Activated naive CD4-positive, alpha-beta T cell treated with anti-CD3 and anti-CD28 coated beads, Interleukin-2, amount 10 ng/mL, durations not matched to agents 7 days and 5 days (primary cell): ENCODE measurements at regions of chr5 and their contacts with region 1.

Region 1: DNA sequence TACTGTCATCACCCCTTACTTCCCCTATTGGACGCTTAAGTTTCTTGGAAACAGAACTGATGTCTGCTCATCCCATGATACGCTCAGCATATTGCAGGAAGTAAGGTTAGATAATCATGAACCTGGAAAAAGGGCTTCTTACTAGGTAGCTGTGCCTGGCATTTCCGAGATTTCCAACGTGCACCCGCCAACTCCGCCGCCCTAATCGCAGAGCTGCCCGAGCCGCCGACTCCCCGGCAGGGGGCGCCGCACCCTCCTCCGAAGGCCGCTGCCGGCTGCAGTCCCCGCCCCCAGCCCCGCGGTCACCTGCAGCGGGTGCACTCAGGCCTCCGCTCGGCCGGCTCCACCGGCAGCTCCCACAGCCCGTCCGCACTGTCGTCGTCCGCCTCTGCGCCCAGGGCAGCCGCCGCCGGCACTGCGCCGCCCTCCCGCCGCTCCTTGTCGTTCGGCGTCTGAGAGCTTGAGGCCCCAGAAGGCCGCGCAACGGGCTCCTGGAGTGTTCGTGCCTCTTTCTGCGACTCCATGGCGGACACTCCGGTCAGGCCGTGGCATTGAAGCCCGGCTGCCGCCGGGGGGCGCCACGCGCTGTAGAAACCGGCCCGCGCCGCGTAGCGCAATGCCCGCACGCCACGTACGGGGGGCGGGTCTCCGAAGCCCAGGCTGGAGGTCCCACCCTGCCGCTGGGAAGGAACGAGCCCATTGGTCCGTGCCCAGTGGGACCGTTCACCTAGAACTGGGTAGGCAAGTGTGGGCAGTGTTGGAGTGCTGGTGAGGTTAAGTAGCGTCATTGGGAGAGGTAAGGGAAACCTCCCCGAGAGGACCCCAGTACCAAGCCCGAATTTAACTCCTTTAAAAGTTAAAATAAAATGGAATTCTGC is at the start of gene DTWD2:
- DNase-seq: peak; percentile 93
- H3K4me3 Mint-ChIP-seq: peak within 1 kb of the TSS; percentile 70
- H3K27ac Mint-ChIP-seq: peak within 1 kb of the TSS; percentile 76
- H3K4me1 Mint-ChIP-seq: peaks cover 16% of the 10 kb centered on the region
- H3K27me3 Mint-ChIP-seq: no peaks in the 10 kb centered on the region

Region 2: GRCh38 chr5:119063579-119064379 is 75.6 kb after region 1 on chr5:
- CTCF ChIA-PET with region 1: no interaction called
- DNase-seq: no peak
- H3K4me3 Mint-ChIP-seq: no peak overlapping the region
- H3K27ac Mint-ChIP-seq: no peak overlapping the region
- H3K4me1 Mint-ChIP-seq: peaks cover 10% of the 10 kb centered on the region
- H3K27me3 Mint-ChIP-seq: no peaks in the 10 kb centered on the region

Region 3: GRCh38 chr5:119238265-119239118 is 250.3 kb after region 1 on chr5:
- CTCF ChIA-PET with region 1: interaction called, 13 read pairs
- DNase-seq: no peak
- H3K4me3 Mint-ChIP-seq: no peak overlapping the region
- H3K27ac Mint-ChIP-seq: no peak overlapping the region
- H3K4me1 Mint-ChIP-seq: peaks cover 17% of the 10 kb centered on the region
- H3K27me3 Mint-ChIP-seq: no peaks in the 10 kb centered on the region

Region 4: GRCh38 chr5:119435436-119436132 is 447.4 kb after region 1 on chr5:
- CTCF ChIA-PET with region 1: interaction called, 28 read pairs
- DNase-seq: peak; percentile 80
- H3K4me3 Mint-ChIP-seq: no peak overlapping the region
- H3K27ac Mint-ChIP-seq: no peak overlapping the region
- H3K4me1 Mint-ChIP-seq: peaks cover 25% of the 10 kb centered on the region
- H3K27me3 Mint-ChIP-seq: peaks cover 33% of the 10 kb centered on the region